ENCODE measurements at regions of chr16 and their contacts with region 1.

Region 1: DNA sequence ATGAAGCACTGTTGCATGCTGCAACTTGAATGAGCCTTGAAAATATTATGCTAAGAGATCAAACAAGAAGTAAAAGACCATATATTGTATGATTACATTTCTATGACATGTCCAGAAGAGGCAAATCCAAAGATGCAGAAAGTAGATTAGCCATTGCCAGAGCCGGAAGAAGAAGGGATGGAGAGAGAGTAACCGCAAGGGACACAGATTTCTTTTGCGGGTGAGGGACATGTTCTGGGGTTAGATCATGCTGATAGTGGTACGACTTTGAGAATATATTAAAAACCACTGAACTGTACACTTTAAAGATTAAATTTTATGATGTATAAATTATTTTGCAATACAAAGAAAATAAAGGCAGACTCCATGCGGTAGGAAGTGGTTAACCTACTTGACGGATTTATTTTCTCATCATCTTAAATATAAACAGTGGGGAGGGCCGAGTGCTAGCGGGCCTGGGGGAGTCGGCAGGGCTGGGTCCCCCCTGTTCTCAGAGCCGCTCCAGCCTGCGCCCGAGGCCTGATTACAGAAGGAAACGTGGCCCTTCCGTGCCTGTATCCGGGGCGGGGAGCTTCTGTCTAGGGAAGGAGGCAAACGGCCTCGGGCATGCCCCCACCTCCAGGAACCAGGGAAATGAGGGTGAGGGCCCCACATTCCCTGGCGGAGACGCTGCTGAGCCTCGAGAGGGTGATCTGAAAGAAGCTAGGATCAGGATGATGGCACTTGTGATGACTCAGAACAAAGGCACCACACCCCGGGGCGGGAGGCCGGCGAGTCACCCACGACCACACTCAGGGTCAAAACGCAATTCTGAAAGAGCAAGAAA is 48.0 kb downstream of the SHCBP1 start:
- DNase-seq: no peak
- H3K4me3 Mint-ChIP-seq: no peak overlapping the region
- H3K27ac Mint-ChIP-seq: no peak overlapping the region
- H3K4me1 Mint-ChIP-seq: peaks cover 6% of the 10 kb centered on the region
- H3K27me3 Mint-ChIP-seq: peaks cover 2% of the 10 kb centered on the region

Region 2: GRCh38 chr16:46466226-46466625 is 107.0 kb before region 1 on chr16:
- intact Hi-C with region 1: no loop called
- DNase-seq: no peak
- H3K4me3 Mint-ChIP-seq: no peak overlapping the region
- H3K27ac Mint-ChIP-seq: no peak overlapping the region
- H3K4me1 Mint-ChIP-seq: no peaks in the 10 kb centered on the region
- H3K27me3 Mint-ChIP-seq: no peaks in the 10 kb centered on the region

Region 3: DNA sequence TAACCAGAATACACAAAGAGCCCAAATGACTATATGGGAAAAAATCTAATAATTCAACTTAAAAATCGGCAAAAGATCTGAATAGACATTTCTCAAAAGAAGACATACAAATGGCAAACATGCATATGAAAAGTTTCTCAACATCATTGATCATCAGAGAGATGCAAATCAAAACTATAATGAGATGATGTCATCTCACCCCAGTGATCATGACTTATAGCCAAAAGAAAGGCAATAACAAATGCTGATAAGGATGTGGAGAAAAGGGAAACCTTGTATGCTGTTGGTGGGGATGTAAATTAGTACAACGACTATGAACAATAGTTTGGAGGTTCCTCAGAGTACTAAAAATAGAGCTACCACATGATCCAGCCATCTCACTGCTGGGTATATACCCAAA is 60.3 kb before region 1 on chr16:
- intact Hi-C with region 1: no loop called
- DNase-seq: no peak
- H3K4me3 Mint-ChIP-seq: no peak overlapping the region
- H3K27ac Mint-ChIP-seq: no peak overlapping the region
- H3K4me1 Mint-ChIP-seq: no peaks in the 10 kb centered on the region
- H3K27me3 Mint-ChIP-seq: no peaks in the 10 kb centered on the region

Region 4: DNA sequence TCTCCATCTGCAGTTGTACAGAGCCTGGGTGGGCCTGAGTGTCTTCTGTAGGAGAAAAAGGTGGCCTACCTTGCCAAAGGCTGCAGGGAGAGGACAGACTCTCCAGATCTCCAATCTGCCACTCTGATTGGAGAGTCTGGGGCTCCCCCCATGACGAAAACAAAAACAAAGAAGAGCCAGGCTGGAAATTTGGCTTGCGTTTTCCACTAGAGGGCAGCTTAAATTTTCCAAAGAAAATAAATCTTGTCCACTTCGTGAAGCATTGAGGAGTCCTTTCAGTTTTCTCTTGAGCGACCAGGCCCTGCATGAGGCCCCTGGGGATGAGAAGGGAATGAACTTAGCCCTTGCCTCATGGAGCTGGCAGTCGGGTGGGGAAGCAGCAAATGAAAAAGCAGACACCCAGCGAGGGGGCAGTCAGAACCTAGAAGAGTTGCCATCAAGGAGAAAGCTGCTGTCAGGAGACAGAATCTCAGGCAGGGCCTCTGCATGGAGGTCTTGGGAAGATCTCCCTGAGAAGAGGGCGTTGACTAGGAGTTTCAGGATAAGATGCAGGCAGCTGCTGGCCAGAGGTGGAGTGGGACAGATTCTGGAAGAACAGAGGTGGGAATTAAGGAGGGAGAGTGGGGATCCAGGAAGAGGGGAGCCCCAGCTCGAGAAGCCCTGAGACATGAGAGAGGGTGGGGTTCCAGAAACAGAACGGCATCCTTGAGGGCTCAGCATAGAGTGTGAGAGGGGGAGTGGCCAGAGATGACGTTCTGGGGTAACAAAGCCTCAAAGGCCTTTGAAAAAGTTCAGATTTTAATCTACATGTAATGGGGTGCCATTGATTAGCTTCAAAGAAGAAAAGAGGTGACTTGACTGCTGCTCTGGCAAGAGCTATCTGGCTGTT is 56.4 kb after region 1 on chr16:
- intact Hi-C with region 1: loop called (anchors 10 kb)
- DNase-seq: no peak
- H3K4me3 Mint-ChIP-seq: no peak overlapping the region
- H3K27ac Mint-ChIP-seq: no peak overlapping the region
- H3K4me1 Mint-ChIP-seq: peaks cover 5% of the 10 kb centered on the region
- H3K27me3 Mint-ChIP-seq: no peaks in the 10 kb centered on the region